ENCODE measurements at regions of chr19 and their contacts with region 1.

Region 1: GRCh38 chr19:55830656-55831055 is 1.1 kb downstream of the NLRP11 start:
- DNase-seq: peak in 1 of 2 experiments; percentile 34
- H3K4me3 ChIP-seq: no peak overlapping the region
- H3K27ac ChIP-seq: no peak overlapping the region
- H3K4me1 ChIP-seq: no peaks in the 10 kb centered on the region
- H3K27me3 ChIP-seq: peaks cover 64% of the 10 kb centered on the region
- CTCF ChIP-seq: no peak

Region 2: GRCh38 chr19:55536951-55537740 is 293.5 kb before region 1 on chr19 and contains the start of gene SBK2:
- CTCF ChIA-PET with region 1: no interaction called
- POLR2A ChIA-PET with region 1: no interaction called
- intact Hi-C with region 1: no loop called
- DNase-seq: peak in 1 of 2 experiments; percentile 31
- H3K4me3 ChIP-seq: no peak within 1 kb of the TSS
- H3K27ac ChIP-seq: no peak within 1 kb of the TSS
- H3K4me1 ChIP-seq: peaks cover 19% of the 10 kb centered on the region
- H3K27me3 ChIP-seq: no peaks in the 10 kb centered on the region
- CTCF ChIP-seq: no peak
- total RNA-seq, gene SBK2: 3.5 and 3.9 TPM in 2 replicates

Region 3: GRCh38 chr19:55781112-55781511 is 49.5 kb before region 1 on chr19:
- CTCF ChIA-PET with region 1: no interaction called
- POLR2A ChIA-PET with region 1: no interaction called
- intact Hi-C with region 1: no loop called
- DNase-seq: no peak
- H3K4me3 ChIP-seq: no peak overlapping the region
- H3K27ac ChIP-seq: no peak overlapping the region
- H3K4me1 ChIP-seq: no peaks in the 10 kb centered on the region
- H3K27me3 ChIP-seq: peaks cover 100% of the 10 kb centered on the region
- CTCF ChIP-seq: no peak

Region 4: GRCh38 chr19:57055956-57056355 is 1225.3 kb after region 1 on chr19:
- CTCF ChIA-PET with region 1: interaction called, 25 read pairs
- POLR2A ChIA-PET with region 1: no interaction called
- intact Hi-C with region 1: no loop called
- DNase-seq: no peak
- H3K4me3 ChIP-seq: no peak overlapping the region
- H3K27ac ChIP-seq: no peak overlapping the region
- H3K4me1 ChIP-seq: no peaks in the 10 kb centered on the region
- H3K27me3 ChIP-seq: peaks cover 50% of the 10 kb centered on the region
- CTCF ChIP-seq: no peak